Activated B cell treated with CpG ODN at 0.5 μM for 24 hours (primary cell): ENCODE measurements at regions of chr12 and their contacts with region 1.

Region 1: GRCh38 chr12:7108796-7109571 is at the start of gene C1RL:
- DNase-seq: peak; percentile 83
- ATAC-seq: peak; percentile 53
- H3K4me3 Mint-ChIP-seq: peak within 1 kb of the TSS; percentile 92
- H3K27ac Mint-ChIP-seq: peak within 1 kb of the TSS; percentile 94
- H3K4me1 Mint-ChIP-seq: peaks cover 29% of the 10 kb centered on the region
- H3K27me3 Mint-ChIP-seq: no peaks in the 10 kb centered on the region
- CTCF ChIP-seq: peak; percentile 58
- total RNA-seq, gene C1RL: 13.5 and 19.2 TPM in 2 replicates

Region 2: GRCh38 chr12:6867413-6868210 is 241.4 kb before region 1 on chr12 and contains the start of gene TPI1:
- CTCF ChIA-PET with region 1: interaction called, 29 read pairs
- POLR2A ChIA-PET with region 1: interaction called, 10 read pairs
- intact Hi-C with region 1: loop called (anchors 1 kb)
- DNase-seq: peak; percentile 65
- ATAC-seq: peak; percentile 78
- H3K4me3 Mint-ChIP-seq: peak within 1 kb of the TSS; percentile 89
- H3K27ac Mint-ChIP-seq: peak within 1 kb of the TSS; percentile 84
- H3K4me1 Mint-ChIP-seq: peaks cover 51% of the 10 kb centered on the region
- H3K27me3 Mint-ChIP-seq: no peaks in the 10 kb centered on the region
- CTCF ChIP-seq: no peak
- total RNA-seq, gene TPI1: 306 and 318 TPM in 2 replicates

Region 3: GRCh38 chr12:6921996-6922946 is 186.7 kb before region 1 on chr12:
- CTCF ChIA-PET with region 1: interaction called, 12 read pairs
- POLR2A ChIA-PET with region 1: interaction called, 3 read pairs
- intact Hi-C with region 1: loop called (anchors 1 kb)
- DNase-seq: no peak
- ATAC-seq: peak; percentile 49
- H3K4me3 Mint-ChIP-seq: peak overlapping the region; percentile 9
- H3K27ac Mint-ChIP-seq: peak overlapping the region; percentile 78
- H3K4me1 Mint-ChIP-seq: peaks cover 50% of the 10 kb centered on the region
- H3K27me3 Mint-ChIP-seq: no peaks in the 10 kb centered on the region
- CTCF ChIP-seq: no peak

Region 4: DNA sequence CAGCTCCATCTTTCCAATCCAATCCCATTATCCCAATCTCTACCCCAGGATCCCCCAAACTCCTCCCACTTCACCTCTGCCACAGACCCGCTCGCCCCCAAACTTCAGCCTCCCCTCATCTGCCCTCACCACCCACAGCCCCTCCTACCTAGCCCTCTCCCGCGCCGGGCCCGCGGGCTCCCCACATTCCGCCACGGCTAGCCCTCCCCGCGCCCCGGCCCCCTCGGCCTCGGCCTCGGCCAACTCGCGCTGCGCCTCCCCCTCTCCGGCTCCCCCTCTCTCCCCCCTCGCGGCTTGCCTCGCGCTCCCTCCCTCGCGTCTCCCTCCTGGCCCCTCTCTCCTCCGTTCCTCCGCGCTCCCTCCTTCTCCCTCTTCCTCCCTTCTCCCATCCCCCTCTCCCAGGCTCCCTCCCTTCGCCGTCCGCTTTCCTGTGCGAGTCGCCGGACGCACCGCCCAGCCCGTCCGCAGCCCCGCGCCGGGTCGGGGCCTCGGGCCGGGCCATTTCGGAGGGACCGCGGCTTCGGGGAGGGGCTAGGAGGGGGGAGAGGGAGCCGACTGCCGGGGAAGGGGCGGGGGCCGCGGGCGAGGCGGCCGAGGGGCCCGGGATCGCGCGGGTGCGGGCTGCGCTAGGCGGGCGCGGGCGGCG is 181.5 kb before region 1 on chr12 and contains the start of gene ATN1:
- CTCF ChIA-PET with region 1: interaction called, 12 read pairs
- POLR2A ChIA-PET with region 1: interaction called, 3 read pairs
- intact Hi-C with region 1: loop called (anchors 1 kb)
- DNase-seq: peak; percentile 58
- ATAC-seq: peak; percentile 42
- H3K4me3 Mint-ChIP-seq: peak within 1 kb of the TSS; percentile 86
- H3K27ac Mint-ChIP-seq: peak within 1 kb of the TSS; percentile 86
- H3K4me1 Mint-ChIP-seq: peaks cover 54% of the 10 kb centered on the region
- H3K27me3 Mint-ChIP-seq: no peaks in the 10 kb centered on the region
- CTCF ChIP-seq: no peak
- total RNA-seq, gene ATN1: 42.8 and 50.9 TPM in 2 replicates

Region 5: GRCh38 chr12:7018350-7019042 is 90.5 kb before region 1 on chr12 and contains the start of gene LPCAT3:
- CTCF ChIA-PET with region 1: interaction called, 3 read pairs
- POLR2A ChIA-PET with region 1: interaction called, 3 read pairs
- intact Hi-C with region 1: loop called (anchors 1 kb)
- DNase-seq: peak; percentile 94
- ATAC-seq: peak; percentile 96
- H3K4me3 Mint-ChIP-seq: peak within 1 kb of the TSS; percentile 87
- H3K27ac Mint-ChIP-seq: peak within 1 kb of the TSS; percentile 77
- H3K4me1 Mint-ChIP-seq: peaks cover 20% of the 10 kb centered on the region
- H3K27me3 Mint-ChIP-seq: no peaks in the 10 kb centered on the region
- CTCF ChIP-seq: no peak
- total RNA-seq, gene LPCAT3: 19.3 and 21.3 TPM in 2 replicates

Region 6: DNA sequence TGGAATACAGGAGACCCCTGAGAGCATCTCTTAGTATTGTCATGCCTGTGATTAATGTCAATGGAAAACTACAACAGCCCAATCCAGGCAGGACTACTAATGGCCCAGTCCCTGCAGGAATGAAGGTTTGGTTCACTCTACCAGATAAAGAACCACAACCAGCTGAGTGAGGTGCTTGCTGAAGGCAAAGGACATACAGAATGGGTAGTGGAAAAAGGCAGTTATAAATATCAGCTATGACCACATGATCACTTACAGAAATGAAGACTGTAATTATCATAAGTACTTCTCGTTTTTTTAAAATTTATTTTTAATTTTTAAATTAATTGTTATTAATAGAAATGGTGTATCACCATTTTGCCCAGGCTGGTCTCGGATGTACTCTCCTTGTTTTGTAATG is 73.5 kb before region 1 on chr12:
- CTCF ChIA-PET with region 1: no interaction called
- POLR2A ChIA-PET with region 1: no interaction called
- intact Hi-C with region 1: no loop called
- DNase-seq: no peak
- ATAC-seq: no peak
- H3K4me3 Mint-ChIP-seq: no peak overlapping the region
- H3K27ac Mint-ChIP-seq: no peak overlapping the region
- H3K4me1 Mint-ChIP-seq: no peaks in the 10 kb centered on the region
- H3K27me3 Mint-ChIP-seq: no peaks in the 10 kb centered on the region
- CTCF ChIP-seq: no peak

Region 7: DNA sequence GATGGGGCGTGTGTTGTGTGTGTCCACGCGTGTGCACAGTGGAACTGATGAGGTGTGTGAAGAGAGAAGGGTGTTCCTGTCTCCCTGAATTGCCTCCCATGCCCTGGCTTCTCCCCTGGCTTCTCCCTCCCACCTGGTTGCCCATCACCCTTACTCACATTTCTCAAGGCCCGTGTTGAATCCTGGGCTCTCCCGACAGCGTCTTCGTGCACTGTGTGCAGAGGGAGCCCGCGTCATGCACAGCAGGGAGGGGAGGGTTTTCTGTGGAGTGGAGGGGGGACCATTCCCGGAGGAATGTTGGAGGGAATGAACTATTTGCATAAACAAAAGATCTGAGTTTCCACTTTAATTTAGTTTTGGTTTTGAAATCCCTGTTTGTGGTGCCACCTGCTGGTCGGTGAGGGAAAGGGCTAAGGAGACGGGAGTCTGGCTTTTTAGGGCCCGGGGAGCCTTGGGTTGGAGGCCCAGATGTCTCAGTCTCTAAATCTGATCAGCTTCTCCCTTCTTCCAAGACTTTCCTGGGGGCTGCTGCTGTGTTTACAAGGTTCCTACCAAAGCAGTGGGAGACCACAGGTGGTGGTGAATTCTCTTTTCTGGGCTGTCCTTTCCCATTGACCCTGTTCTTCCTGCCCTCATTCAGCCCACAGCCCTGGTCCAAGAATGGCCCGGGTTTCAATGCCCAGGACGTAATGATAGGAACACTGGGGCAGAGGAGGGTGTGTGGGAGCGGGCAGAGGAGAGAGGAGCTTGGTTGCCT is 16.6 kb before region 1 on chr12 and contains the start of gene C1R:
- CTCF ChIA-PET with region 1: interaction called, 6 read pairs
- POLR2A ChIA-PET with region 1: interaction called, 8 read pairs
- intact Hi-C with region 1: loop called (anchors 1 kb)
- DNase-seq: peak; percentile 53
- ATAC-seq: peak; percentile 80
- H3K4me3 Mint-ChIP-seq: peak within 1 kb of the TSS; percentile 87
- H3K27ac Mint-ChIP-seq: peak within 1 kb of the TSS; percentile 61
- H3K4me1 Mint-ChIP-seq: peaks cover 8% of the 10 kb centered on the region
- H3K27me3 Mint-ChIP-seq: no peaks in the 10 kb centered on the region
- CTCF ChIP-seq: no peak
- total RNA-seq, gene C1R: 0.54 and 0.78 TPM in 2 replicates

Region 8: DNA sequence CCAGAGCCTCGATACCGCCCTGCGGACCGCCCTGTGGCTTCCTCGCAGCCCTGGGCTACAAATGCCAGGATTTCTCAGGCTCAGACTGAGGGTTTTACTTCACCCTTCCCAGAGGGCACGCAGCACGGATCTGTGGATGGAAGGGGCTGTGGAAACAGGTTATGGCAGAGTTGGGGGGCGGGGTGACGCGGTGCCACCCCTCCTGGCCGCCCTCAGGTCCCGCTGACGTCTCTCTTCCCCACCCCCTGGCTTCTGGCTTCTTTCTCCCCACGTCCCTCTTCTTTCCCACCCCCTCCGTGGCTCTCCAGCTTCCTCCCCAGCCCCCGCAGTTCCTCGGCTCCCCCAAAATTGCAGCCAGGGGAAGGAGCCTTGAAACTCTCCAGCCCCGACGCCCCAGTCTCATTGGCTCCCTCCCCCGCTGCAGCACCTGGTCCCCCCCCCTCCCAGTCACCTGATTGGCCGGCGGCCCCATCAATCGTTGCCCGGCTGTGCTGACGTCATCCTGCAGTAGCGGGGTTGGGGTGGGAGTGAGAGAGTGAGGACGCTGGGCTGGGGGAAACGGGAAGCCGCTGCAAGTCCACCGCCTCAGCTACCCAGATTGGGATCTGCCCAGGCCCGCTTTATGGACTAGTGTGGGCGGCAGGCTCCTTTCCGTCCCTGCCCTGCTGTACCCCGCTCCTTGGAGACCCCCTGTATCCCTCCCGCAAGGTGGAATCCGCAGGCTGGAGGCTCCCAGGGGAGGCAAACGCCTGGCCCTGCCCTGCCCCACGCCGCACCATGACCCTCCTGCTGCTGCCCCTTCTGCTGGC is 21.1 kb after region 1 on chr12 and contains the start of gene CLSTN3:
- CTCF ChIA-PET with region 1: no interaction called
- POLR2A ChIA-PET with region 1: no interaction called
- intact Hi-C with region 1: loop called (anchors 1 kb)
- DNase-seq: peak; percentile 77
- ATAC-seq: peak; percentile 89
- H3K4me3 Mint-ChIP-seq: peak within 1 kb of the TSS; percentile 93
- H3K27ac Mint-ChIP-seq: peak within 1 kb of the TSS; percentile 80
- H3K4me1 Mint-ChIP-seq: peaks cover 24% of the 10 kb centered on the region
- H3K27me3 Mint-ChIP-seq: no peaks in the 10 kb centered on the region
- CTCF ChIP-seq: no peak
- total RNA-seq, gene CLSTN3: 14.1 and 14.8 TPM in 2 replicates